HepG2 (cell line): ENCODE measurements at regions of chr20 and their contacts with region 1.

Region 1: DNA sequence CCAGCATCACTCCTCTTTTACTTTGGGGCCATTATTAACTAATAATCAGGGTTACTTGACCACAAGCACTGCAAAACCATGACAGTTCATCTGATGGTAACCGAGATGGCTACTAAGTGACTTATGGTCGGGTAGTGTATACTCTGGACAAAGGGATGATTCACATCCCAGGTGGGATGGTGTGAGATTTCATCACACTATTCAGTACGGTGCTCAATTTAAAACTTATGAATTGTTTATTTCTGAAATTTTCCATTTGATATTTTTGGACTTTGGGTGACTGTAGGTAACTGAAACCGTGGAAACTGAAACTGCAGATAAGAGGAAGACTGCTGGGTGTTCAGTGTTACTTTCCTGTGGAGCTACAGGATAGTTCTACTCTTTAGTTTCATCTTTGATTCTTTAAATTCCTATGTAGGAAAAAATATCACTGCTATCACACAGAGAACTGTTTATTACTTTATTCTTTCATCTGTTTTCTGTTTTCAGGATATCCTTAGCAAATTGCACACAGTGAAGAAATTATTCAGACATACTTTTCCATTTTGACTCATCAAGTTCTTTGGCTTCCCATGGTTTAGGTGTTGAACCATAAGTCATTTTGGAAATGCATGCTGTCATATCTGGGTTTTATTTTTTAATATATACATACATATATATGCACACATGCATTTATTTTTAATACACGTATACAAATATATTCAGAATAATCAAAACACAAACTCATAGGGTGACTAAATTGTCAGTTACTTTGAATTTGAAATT is 59.1 kb upstream of the C20orf144 start:
- DNase-seq: peak; percentile 76
- ATAC-seq: peak; percentile 88
- H3K4me3 ChIP-seq: peak overlapping the region in 1 of 3 experiments; percentile 6; a peak in 1 of 6 replicates
- H3K27ac ChIP-seq: peak overlapping the region; percentile 19
- H3K4me1 ChIP-seq: peaks cover 32% of the 10 kb centered on the region
- H3K27me3 ChIP-seq: no peaks in the 10 kb centered on the region
- CTCF ChIP-seq: no peak
- EP300 ChIP-seq: peak in 1 of 2 experiments; percentile 16; a peak in 1 of 4 replicates
- POLR2A ChIP-seq: no peak
- RAD21 ChIP-seq: no peak

Region 2: GRCh38 chr20:33515569-33516216 is 87.3 kb before region 1 on chr20:
- CTCF ChIA-PET with region 1: no interaction called
- POLR2A ChIA-PET with region 1: no interaction called
- in situ Hi-C with region 1: no loop called
- intact Hi-C with region 1: no loop called
- DNase-seq: peak; percentile 27
- ATAC-seq: no peak
- H3K4me3 ChIP-seq: no peak overlapping the region
- H3K27ac ChIP-seq: no peak overlapping the region
- H3K4me1 ChIP-seq: peaks cover 51% of the 10 kb centered on the region
- H3K27me3 ChIP-seq: no peaks in the 10 kb centered on the region
- CTCF ChIP-seq: peak; percentile 56
- EP300 ChIP-seq: no peak
- POLR2A ChIP-seq: no peak
- RAD21 ChIP-seq: no peak

Region 3: GRCh38 chr20:33561692-33562601 is 41.1 kb before region 1 on chr20:
- CTCF ChIA-PET with region 1: no interaction called
- POLR2A ChIA-PET with region 1: no interaction called
- in situ Hi-C with region 1: no loop called
- intact Hi-C with region 1: loop called (anchors 5 kb)
- DNase-seq: peak; percentile 93
- ATAC-seq: peak; percentile 91
- H3K4me3 ChIP-seq: no peak overlapping the region
- H3K27ac ChIP-seq: peak overlapping the region; percentile 15
- H3K4me1 ChIP-seq: peaks cover 57% of the 10 kb centered on the region
- H3K27me3 ChIP-seq: no peaks in the 10 kb centered on the region
- CTCF ChIP-seq: peak; percentile 50
- EP300 ChIP-seq: peak in 1 of 2 experiments; percentile 63; a peak in 2 of 4 replicates
- POLR2A ChIP-seq: no peak
- RAD21 ChIP-seq: peak; percentile 44; the same call in 1 of the 2 replicates

Region 4: GRCh38 chr20:33686100-33686983 is 83.3 kb after region 1 on chr20 and contains the start of gene E2F1:
- CTCF ChIA-PET with region 1: no interaction called
- POLR2A ChIA-PET with region 1: no interaction called
- in situ Hi-C with region 1: no loop called
- intact Hi-C with region 1: no loop called
- DNase-seq: peak; percentile 94
- ATAC-seq: peak; percentile 91
- H3K4me3 ChIP-seq: peak within 1 kb of the TSS; percentile 58 to 82 (median 65)
- H3K27ac ChIP-seq: peak within 1 kb of the TSS; percentile 56
- H3K4me1 ChIP-seq: peaks cover 63% of the 10 kb centered on the region
- H3K27me3 ChIP-seq: no peaks in the 10 kb centered on the region
- CTCF ChIP-seq: peak; percentile 82
- EP300 ChIP-seq: no peak
- POLR2A ChIP-seq: peak; percentile 42 to 51; a peak in 1 of 4 replicates
- RAD21 ChIP-seq: peak; percentile 5
- total RNA-seq, gene E2F1: 25.3 and 39.4 TPM in 2 replicates